ENCODE measurements at regions of chr20 and their contacts with region 1.

Region 1: GRCh38 chr20:53578492-53579222 is 15.0 kb downstream of the ZNF217 start:
- DNase-seq: no peak
- H3K4me3 ChIP-seq: peak overlapping the region in 1 of 2 donors; percentile 15
- H3K27ac ChIP-seq: peak overlapping the region; percentile 78
- H3K4me1 ChIP-seq: peaks cover 48% of the 10 kb centered on the region
- H3K27me3 ChIP-seq: no peaks in the 10 kb centered on the region
- CTCF ChIP-seq: peak; percentile 77 to 99 (median 92)
- POLR2A ChIP-seq: no peak

Region 2: DNA sequence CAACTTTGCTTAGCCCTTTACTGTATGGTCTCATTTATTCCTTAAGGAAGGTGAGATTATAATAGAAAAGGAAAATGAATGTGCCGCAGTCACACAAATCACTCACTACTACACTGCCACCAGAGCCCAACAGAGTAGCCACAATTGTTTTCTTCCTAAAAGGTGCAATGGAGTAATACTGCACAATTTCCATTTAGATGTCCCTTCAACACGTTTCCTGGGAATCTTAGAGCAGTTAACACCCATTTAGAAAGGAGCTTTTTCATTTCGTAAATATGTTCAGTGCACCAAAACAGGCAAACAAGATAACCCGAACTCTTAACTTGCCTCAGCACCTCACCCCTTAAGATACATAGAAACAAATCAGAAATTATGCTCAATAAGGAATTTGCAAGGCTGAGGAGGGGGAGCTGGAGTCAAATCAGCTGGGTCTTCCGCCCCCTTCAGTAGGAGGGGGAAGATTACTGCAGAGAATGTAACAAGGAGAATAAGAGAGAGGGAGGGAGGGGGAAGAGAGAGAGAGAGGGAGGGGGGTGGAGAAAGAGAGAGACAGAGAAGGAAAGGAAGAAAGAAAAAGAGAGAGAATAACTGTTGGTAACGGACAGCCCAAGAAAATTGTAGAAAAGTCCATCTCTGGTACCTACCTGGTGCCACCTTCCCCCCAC is 336.3 kb after region 1 on chr20:
- intact Hi-C with region 1: loop called (anchors 5 kb)
- DNase-seq: no peak
- H3K4me3 ChIP-seq: peak overlapping the region; percentile 57 to 59
- H3K27ac ChIP-seq: peak overlapping the region; percentile 91
- H3K4me1 ChIP-seq: peaks cover 39% of the 10 kb centered on the region
- H3K27me3 ChIP-seq: no peaks in the 10 kb centered on the region
- CTCF ChIP-seq: peak in 1 of 3 experiments; percentile 7
- POLR2A ChIP-seq: no peak

Measured in vagina (tissue), 2 donors.